IMR-90 (cell line): ENCODE measurements at regions of chr4 and their contacts with region 1.

Region 1: GRCh38 chr4:125229596-125230058 is 85.1 kb upstream of the FAT4 start:
- DNase-seq: no peak
- ATAC-seq: no peak
- H3K4me3 ChIP-seq: no peak overlapping the region
- H3K27ac ChIP-seq: no peak overlapping the region
- H3K4me1 ChIP-seq: no peaks in the 10 kb centered on the region
- H3K27me3 ChIP-seq: no peaks in the 10 kb centered on the region
- CTCF ChIP-seq: no peak
- POLR2A ChIP-seq: no peak
- RAD21 ChIP-seq: no peak

Region 2: DNA sequence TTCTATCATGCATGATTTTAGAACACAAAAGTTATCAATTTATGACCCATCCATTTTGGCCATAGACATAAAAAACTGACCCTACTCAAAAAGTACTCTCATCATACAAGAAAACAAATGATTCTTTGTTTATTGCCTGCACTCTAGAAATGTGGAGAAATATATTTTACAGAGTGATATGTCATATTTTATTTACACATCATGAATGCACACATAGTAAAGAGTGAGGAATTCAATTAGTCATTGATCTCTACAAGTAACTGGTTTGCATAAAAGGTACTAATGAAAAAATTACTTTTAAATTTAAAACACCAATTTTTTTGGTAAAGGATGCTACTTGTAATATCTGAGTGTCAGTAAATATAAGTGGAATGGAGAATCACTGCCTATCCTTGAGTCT is 157.4 kb before region 1 on chr4:
- CTCF ChIA-PET with region 1: no interaction called
- POLR2A ChIA-PET with region 1: no interaction called
- dilution Hi-C with region 1: no loop called
- in situ Hi-C with region 1: no loop called
- intact Hi-C with region 1: loop called (anchors 2 kb)
- DNase-seq: no peak
- ATAC-seq: no peak
- H3K4me3 ChIP-seq: no peak overlapping the region
- H3K27ac ChIP-seq: no peak overlapping the region
- H3K4me1 ChIP-seq: no peaks in the 10 kb centered on the region
- H3K27me3 ChIP-seq: no peaks in the 10 kb centered on the region
- CTCF ChIP-seq: no peak
- POLR2A ChIP-seq: no peak
- RAD21 ChIP-seq: no peak